ENCODE measurements at regions of chr13 and their contacts with region 1.

Region 1: DNA sequence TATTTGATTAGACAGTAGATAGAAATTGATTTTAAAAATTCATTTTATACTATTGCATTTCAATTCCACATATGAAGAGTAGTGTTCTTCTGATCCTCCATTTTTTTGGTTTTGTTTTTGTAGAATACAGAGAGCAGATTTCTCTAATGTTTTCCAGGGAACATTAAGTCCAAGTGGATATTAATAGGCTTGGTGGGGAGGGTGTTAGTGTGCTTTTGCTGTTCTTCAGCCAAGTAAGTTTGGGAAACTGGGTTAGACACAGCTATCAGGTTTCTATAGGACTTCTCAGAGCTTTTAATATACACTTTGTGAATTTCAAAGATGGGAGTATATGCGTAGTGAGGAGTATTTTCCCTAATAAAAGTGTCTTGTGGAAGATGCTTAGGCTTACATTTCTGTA is 21.8 kb downstream of the NAA16 start:
- DNase-seq: no peak
- H3K4me3 ChIP-seq: no peak overlapping the region
- H3K27ac ChIP-seq: no peak overlapping the region
- H3K4me1 ChIP-seq: no peaks in the 10 kb centered on the region
- CTCF ChIP-seq: no peak

Region 2: DNA sequence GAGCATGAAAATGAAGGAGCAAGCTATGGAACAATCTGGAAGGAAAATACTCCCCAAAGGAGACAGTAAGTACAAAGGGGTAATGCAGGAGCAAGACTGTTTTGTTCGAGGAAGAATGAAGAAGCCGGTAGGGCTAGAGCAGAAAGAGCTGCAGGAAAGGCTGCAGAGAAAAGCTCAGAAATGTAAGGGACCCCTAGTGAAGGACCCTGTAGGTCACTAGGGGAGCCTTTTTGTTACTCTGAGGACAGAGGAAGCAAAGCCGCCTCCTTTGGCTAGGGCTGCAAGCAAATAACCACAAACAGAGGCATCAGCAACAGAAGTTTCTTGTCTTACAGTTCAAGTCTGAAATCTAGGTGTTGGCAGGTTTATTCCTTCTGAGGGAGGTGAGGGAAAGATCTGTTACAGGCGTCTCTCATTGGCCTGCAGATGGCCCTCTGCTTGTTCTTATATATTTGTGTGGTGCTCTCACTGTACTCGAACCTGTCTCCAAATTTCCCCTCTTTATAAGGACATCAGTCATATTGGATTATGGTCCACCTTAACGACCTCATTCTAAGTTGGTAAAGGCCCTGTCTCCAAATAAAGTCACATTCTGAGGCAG is 1315.1 kb before region 1 on chr13:
- CTCF ChIA-PET with region 1: no interaction called
- POLR2A ChIA-PET with region 1: no interaction called
- intact Hi-C with region 1: no loop called
- DNase-seq: no peak
- H3K4me3 ChIP-seq: no peak overlapping the region
- H3K27ac ChIP-seq: no peak overlapping the region
- H3K4me1 ChIP-seq: peaks cover 6% of the 10 kb centered on the region
- CTCF ChIP-seq: 0 out of 2 replicates have a peak, but pooled peaks have one; percentile 34

Region 3: GRCh38 chr13:41398494-41399170 is 65.8 kb after region 1 on chr13:
- CTCF ChIA-PET with region 1: no interaction called
- POLR2A ChIA-PET with region 1: no interaction called
- intact Hi-C with region 1: loop called (anchors 10 kb)
- DNase-seq: no peak
- H3K4me3 ChIP-seq: no peak overlapping the region
- H3K27ac ChIP-seq: no peak overlapping the region
- H3K4me1 ChIP-seq: no peaks in the 10 kb centered on the region
- CTCF ChIP-seq: no peak

Measured in OCI-LY7 (cell line).